K562 (cell line): ENCODE measurements at regions of chr5 and their contacts with region 1.

Region 1: DNA sequence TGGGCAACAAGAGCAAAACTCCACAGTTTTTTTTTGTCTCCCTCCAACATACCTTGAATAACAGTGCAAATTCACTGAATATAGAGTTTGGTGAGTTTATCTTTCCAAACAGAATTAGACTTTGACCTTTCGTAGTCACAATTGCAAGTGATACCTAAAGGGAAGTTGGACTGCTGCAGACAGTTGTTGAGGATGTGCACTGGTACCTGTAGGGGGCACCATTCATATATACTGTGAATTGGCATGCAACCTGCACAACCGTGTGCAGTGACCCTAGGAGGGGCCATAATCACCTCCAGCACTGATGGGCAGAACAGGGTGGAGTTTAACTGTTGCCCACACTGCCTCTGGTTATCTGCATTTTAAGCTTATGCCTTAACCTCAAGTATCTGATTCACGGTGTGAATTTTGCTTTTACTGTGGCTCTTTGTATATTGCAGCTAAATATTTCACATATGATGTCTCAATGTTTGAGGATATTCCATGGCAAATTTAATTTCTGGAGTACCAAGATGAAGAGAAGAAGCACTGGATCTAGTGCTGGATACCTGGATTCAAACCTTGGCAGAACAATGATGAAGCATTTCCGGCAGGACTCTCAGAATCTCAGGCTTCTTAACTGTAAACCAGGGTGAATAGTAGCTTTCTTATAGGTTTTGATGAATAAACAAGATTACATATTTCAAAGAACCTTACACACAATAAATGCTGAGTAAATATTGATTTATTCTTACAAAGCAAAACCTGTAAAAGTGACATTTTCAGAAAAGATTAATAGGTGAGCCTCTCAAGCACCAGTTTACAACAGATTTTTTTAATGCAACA is 144.3 kb downstream of the ACTBL2 start:
- DNase-seq: peak; percentile 32 to 67 (median 44)
- ATAC-seq: peak; percentile 98
- H3K4me3 ChIP-seq: no peak overlapping the region
- H3K27ac ChIP-seq: no peak overlapping the region
- H3K4me1 ChIP-seq: no peaks in the 10 kb centered on the region
- H3K27me3 ChIP-seq: no peaks in the 10 kb centered on the region
- CTCF ChIP-seq: peak; percentile 69 to 72 (median 71)
- EP300 ChIP-seq: no peak
- POLR2A ChIP-seq: no peak
- RAD21 ChIP-seq: peak; percentile 68 to 82

Region 2: DNA sequence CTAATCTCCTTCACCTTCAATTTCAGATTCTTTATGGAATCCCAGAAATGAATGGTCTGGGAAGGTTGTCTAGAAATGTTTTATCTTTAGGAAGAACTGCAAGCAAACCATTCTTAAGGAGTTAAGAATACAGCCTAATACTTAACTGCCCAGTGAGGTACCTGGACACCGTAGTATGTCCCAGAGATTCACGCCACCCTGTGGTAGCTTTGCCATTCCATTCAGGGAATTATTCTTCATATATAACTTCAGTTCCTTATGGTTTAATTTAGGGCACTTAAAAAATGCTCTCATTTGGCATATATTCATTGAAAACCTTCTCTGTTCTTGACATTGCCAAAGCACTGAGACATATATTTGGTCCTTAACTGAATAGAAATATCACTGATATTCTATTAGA is 94.6 kb after region 1 on chr5:
- CTCF ChIA-PET with region 1: no interaction called
- POLR2A ChIA-PET with region 1: no interaction called
- in situ Hi-C with region 1: no loop called
- intact Hi-C with region 1: loop called (anchors 1 kb)
- DNase-seq: peak in 3 of 4 experiments; percentile 13 to 41 (median 17)
- ATAC-seq: peak; percentile 87
- H3K4me3 ChIP-seq: no peak overlapping the region
- H3K27ac ChIP-seq: no peak overlapping the region
- H3K4me1 ChIP-seq: no peaks in the 10 kb centered on the region
- H3K27me3 ChIP-seq: peaks cover 0 to 10% of the 10 kb centered on the region in 2 experiments; a peak in 1 of 5 replicates
- CTCF ChIP-seq: peak; percentile 41 to 66 (median 53); a peak in 5 of 6 replicates
- EP300 ChIP-seq: no peak
- POLR2A ChIP-seq: no peak
- RAD21 ChIP-seq: peak; percentile 61 to 75

Region 3: GRCh38 chr5:57499262-57500050 is 161.2 kb after region 1 on chr5:
- CTCF ChIA-PET with region 1: no interaction called
- POLR2A ChIA-PET with region 1: no interaction called
- in situ Hi-C with region 1: no loop called
- intact Hi-C with region 1: loop called (anchors 5 kb)
- DNase-seq: peak; percentile 39 to 47 (median 44)
- ATAC-seq: peak; percentile 79
- H3K4me3 ChIP-seq: no peak overlapping the region
- H3K27ac ChIP-seq: no peak overlapping the region
- H3K4me1 ChIP-seq: peaks cover 0 to 8% of the 10 kb centered on the region in 2 experiments; a peak in 4 of 5 replicates
- H3K27me3 ChIP-seq: no peaks in the 10 kb centered on the region
- CTCF ChIP-seq: peak; percentile 44 to 72 (median 66)
- EP300 ChIP-seq: no peak
- POLR2A ChIP-seq: no peak
- RAD21 ChIP-seq: peak; percentile 72 to 75

Region 4: DNA sequence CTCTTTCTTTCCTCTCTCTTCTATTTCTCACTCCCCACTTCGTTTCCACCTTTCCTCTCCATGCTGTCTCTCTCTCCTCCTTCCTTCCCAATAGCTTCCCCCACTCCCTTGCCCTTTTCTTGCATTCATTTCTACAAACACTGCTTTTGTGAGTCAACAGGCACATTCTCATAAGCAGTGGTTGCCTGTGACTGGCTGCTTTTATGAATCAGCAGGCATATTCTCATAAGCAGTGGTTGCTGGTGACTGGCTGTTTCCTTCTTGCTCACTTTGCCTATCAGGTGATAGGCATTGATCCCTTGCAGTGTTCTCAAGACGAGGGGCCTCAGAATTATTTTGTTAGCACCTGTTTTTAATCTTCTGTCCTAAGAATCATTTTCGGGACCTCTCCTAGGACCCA is 260.5 kb after region 1 on chr5:
- CTCF ChIA-PET with region 1: no interaction called
- POLR2A ChIA-PET with region 1: no interaction called
- in situ Hi-C with region 1: no loop called
- intact Hi-C with region 1: no loop called
- DNase-seq: no peak
- ATAC-seq: no peak
- H3K4me3 ChIP-seq: no peak overlapping the region
- H3K27ac ChIP-seq: no peak overlapping the region
- H3K4me1 ChIP-seq: no peaks in the 10 kb centered on the region
- H3K27me3 ChIP-seq: peaks cover 0 to 12% of the 10 kb centered on the region in 2 experiments; a peak in 3 of 5 replicates
- CTCF ChIP-seq: no peak
- EP300 ChIP-seq: no peak
- POLR2A ChIP-seq: no peak
- RAD21 ChIP-seq: no peak